Transverse colon (tissue), 4 donors: ENCODE measurements at regions of chr5 and their contacts with region 1.

Region 1: GRCh38 chr5:147558826-147559225 is 49.0 kb upstream of the DPYSL3 start:
- DNase-seq: peak; percentile 29
- H3K4me3 ChIP-seq: no peak overlapping the region
- H3K27ac ChIP-seq: peak overlapping the region; percentile 4 to 48 (median 35)
- H3K4me1 ChIP-seq: peaks cover under 1 to 21% (median 6%) of the 10 kb centered on the region in 4 donors
- H3K27me3 ChIP-seq: no peaks in the 10 kb centered on the region
- CTCF ChIP-seq: peak; percentile 41 to 61 (median 53)
- EP300 ChIP-seq: no peak
- POLR2A ChIP-seq: no peak

Region 2: DNA sequence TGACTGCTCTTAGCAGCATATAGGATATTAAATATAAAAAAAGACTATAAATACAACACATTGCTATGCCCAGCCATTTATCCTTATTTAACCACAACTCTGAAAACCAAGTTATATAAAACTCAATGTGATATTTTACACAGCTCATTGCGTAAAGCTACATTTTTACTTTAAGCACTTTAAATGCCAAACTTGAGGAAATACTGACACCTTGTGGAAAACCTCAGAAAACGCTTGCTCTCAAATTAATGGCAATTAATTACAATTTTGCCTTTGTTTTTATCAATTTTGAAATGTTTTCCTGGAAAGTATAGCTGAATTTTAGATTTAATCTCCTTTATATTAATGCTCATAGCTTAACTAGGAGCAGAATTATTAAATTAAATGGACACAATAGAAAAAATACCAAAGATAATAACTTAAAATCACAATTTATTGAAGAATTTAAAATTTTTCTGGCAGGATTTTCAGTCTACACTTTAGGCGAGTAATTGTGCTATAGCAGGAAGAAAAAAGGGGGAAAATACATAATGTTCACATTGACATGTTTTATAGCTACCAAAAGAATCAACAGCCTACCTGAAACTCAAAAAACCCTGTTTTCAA is 1428.3 kb before region 1 on chr5:
- in situ Hi-C with region 1: no loop called
- intact Hi-C with region 1: no loop called
- DNase-seq: no peak
- H3K4me3 ChIP-seq: no peak overlapping the region
- H3K27ac ChIP-seq: no peak overlapping the region
- H3K4me1 ChIP-seq: no peaks in the 10 kb centered on the region
- H3K27me3 ChIP-seq: no peaks in the 10 kb centered on the region
- CTCF ChIP-seq: peak; percentile 31 to 45 (median 44)
- EP300 ChIP-seq: no peak
- POLR2A ChIP-seq: no peak

Region 3: DNA sequence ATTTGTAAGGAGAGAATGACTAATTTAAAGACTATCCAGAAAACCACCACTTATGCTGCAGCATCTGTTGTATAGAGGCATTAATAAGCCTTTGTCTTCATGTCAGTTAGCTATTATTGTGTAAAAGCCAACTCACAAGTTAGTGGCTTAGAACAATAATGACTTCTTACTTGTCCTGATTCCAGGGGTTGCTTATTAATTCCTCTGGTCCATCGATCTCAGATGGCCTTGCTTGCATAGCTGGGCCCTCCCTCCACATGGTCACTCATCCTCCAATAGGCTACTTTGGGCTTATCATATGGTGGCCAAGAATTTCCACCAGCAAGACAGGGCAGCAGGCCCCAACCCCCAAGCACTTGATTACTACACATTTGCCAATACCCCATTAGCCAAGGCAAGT is 368.5 kb before region 1 on chr5:
- in situ Hi-C with region 1: no loop called
- intact Hi-C with region 1: no loop called
- DNase-seq: no peak
- H3K4me3 ChIP-seq: no peak overlapping the region
- H3K27ac ChIP-seq: no peak overlapping the region
- H3K4me1 ChIP-seq: no peaks in the 10 kb centered on the region
- H3K27me3 ChIP-seq: peaks cover 4% of the 10 kb centered on the region
- CTCF ChIP-seq: no peak
- EP300 ChIP-seq: no peak
- POLR2A ChIP-seq: no peak

Region 4: GRCh38 chr5:147223948-147224791 is 334.7 kb before region 1 on chr5:
- in situ Hi-C with region 1: loop called in 3 of 4 experiments (anchors 10 to 25 kb)
- intact Hi-C with region 1: loop called (anchors 5 kb)
- DNase-seq: peak; percentile 16
- H3K4me3 ChIP-seq: no peak overlapping the region
- H3K27ac ChIP-seq: no peak overlapping the region
- H3K4me1 ChIP-seq: no peaks in the 10 kb centered on the region
- H3K27me3 ChIP-seq: no peaks in the 10 kb centered on the region
- CTCF ChIP-seq: peak; percentile 55 to 64 (median 58)
- EP300 ChIP-seq: no peak
- POLR2A ChIP-seq: no peak

Region 5: DNA sequence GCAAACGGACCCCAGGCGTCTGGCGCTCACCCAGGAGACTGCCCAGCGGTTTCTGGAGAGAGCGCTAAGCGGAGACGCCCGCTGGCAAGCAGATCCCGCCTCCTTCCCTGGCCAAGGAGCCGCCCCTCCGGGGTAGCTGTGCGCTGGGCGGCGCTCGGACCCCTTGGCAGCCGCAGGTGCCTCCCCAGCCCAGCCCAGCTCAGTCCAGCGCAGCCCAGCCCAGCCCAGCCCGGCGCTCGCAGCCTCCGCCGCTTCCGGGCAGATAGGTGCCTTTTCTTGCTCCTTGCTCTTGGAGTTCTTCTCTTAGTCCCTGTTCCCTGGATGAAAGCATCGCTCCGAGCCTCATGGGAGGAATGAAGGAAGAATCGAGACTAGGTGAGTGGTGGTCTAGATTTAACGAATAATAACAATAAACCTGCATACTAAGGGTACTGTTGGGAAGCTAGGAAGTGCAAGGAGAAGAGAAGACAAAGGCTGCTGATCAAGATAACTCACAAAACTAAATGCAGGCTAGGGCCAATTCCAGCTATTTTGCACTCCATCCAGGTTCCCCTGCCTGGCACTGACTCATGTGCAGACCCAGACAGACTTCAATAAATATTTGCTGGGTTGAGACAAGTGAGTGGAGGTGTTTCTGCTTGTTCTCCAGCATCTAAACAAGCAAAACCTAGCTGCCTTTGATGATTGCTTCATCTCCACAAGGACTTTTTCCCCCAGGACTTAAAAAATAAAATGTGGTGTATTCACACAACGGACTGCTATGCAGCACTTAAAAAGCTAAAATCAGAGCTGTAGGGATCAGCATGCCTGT is 323.8 kb before region 1 on chr5 and contains the start of gene STK32A:
- in situ Hi-C with region 1: loop called in 1 of 4 experiments (anchors 25 kb)
- intact Hi-C with region 1: no loop called
- DNase-seq: peak; percentile 39
- H3K4me3 ChIP-seq: peak within 1 kb of the TSS; percentile 29 to 50 (median 36)
- H3K27ac ChIP-seq: peak within 1 kb of the TSS; percentile 8 to 64 (median 51)
- H3K4me1 ChIP-seq: peaks cover 0 to 11% (median 4%) of the 10 kb centered on the region in 4 donors
- H3K27me3 ChIP-seq: peaks cover 30% of the 10 kb centered on the region
- CTCF ChIP-seq: no peak
- EP300 ChIP-seq: no peak
- POLR2A ChIP-seq: no peak
- total RNA-seq, gene STK32A: 1.4 to 1.6 TPM in 2 of 4 donors, not detected in the others

Region 6: GRCh38 chr5:147391781-147392180 is 167.0 kb before region 1 on chr5:
- in situ Hi-C with region 1: loop called in 1 of 4 experiments (anchors 25 kb)
- intact Hi-C with region 1: no loop called
- DNase-seq: peak; percentile 48
- H3K4me3 ChIP-seq: no peak overlapping the region
- H3K27ac ChIP-seq: no peak overlapping the region
- H3K4me1 ChIP-seq: peaks cover 0 to 9% (median 0%) of the 10 kb centered on the region in 4 donors
- H3K27me3 ChIP-seq: no peaks in the 10 kb centered on the region
- CTCF ChIP-seq: peak; percentile 50 to 62 (median 56)
- EP300 ChIP-seq: no peak
- POLR2A ChIP-seq: no peak

Region 7: GRCh38 chr5:147403651-147404640 is 154.9 kb before region 1 on chr5:
- in situ Hi-C with region 1: loop called in 1 of 4 experiments (anchors 25 kb)
- intact Hi-C with region 1: loop called (anchors 10 kb)
- DNase-seq: peak; percentile 32
- H3K4me3 ChIP-seq: no peak overlapping the region
- H3K27ac ChIP-seq: peak overlapping the region; percentile 78 to 90 (median 84)
- H3K4me1 ChIP-seq: peaks cover 8 to 24% (median 11%) of the 10 kb centered on the region in 4 donors
- H3K27me3 ChIP-seq: no peaks in the 10 kb centered on the region
- CTCF ChIP-seq: no peak
- EP300 ChIP-seq: peak; percentile 35
- POLR2A ChIP-seq: no peak

Region 8: GRCh38 chr5:147453875-147454814 is 104.7 kb before region 1 on chr5:
- in situ Hi-C with region 1: loop called in 1 of 4 experiments (anchors 10 kb)
- intact Hi-C with region 1: loop called (anchors 2 kb)
- DNase-seq: peak; percentile 84
- H3K4me3 ChIP-seq: peak overlapping the region; percentile 56 to 77 (median 62)
- H3K27ac ChIP-seq: peak overlapping the region; percentile 81 to 97 (median 92)
- H3K4me1 ChIP-seq: peaks cover 4 to 33% (median 16%) of the 10 kb centered on the region in 4 donors
- H3K27me3 ChIP-seq: peaks cover 46% of the 10 kb centered on the region
- CTCF ChIP-seq: peak; percentile 84 to 94 (median 88)
- EP300 ChIP-seq: no peak
- POLR2A ChIP-seq: no peak

Region 9: GRCh38 chr5:147509710-147510651 is 48.8 kb before region 1 on chr5 and contains the start of gene DPYSL3:
- in situ Hi-C with region 1: no loop called
- intact Hi-C with region 1: loop called (anchors 5 kb)
- DNase-seq: peak; percentile 54
- H3K4me3 ChIP-seq: peak within 1 kb of the TSS; percentile 48 to 63 (median 50)
- H3K27ac ChIP-seq: peak within 1 kb of the TSS; percentile 81 to 87 (median 86)
- H3K4me1 ChIP-seq: peaks cover 0 to 8% (median 2%) of the 10 kb centered on the region in 4 donors
- H3K27me3 ChIP-seq: peaks cover 12% of the 10 kb centered on the region
- CTCF ChIP-seq: peak in 3 of 5 experiments; percentile 20 to 32 (median 20)
- EP300 ChIP-seq: no peak
- POLR2A ChIP-seq: peak; percentile 61
- total RNA-seq, gene DPYSL3: 27.6 to 107 (median 31.4) TPM